Posterior vena cava (tissue), 2 donors: ENCODE measurements at regions of chr14 and their contacts with region 1.

Region 1: GRCh38 chr14:95952945-95953724 is 76.5 kb downstream of the TUNAR start:
- DNase-seq: no peak

Region 2: DNA sequence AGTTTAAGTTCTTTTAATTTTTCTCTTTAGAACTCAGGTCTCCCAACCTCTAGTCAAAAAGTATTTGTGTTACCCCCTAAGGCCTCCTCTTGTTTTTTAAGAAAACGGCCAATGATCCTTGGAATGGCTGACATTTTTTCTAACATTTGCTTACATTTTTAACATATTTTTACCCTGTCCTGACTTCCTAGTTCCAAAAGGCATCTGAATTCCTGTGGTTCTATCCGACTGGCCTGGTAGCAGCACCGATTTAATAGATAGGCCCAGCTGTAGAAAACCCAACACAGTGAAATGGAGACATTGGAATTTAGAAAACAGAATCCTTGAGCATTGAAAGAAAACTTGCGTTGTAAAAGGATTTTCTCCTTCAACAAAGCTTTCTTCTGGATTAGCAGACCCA is 1048.5 kb before region 1 on chr14:
- intact Hi-C with region 1: loop called in 1 of 2 experiments (anchors 5 kb)
- DNase-seq: no peak

Region 3: GRCh38 chr14:95964901-95965300 is 11.8 kb after region 1 on chr14:
- intact Hi-C with region 1: no loop called
- DNase-seq: no peak